ENCODE measurements at regions of chr18 and their contacts with region 1.

Region 1: GRCh38 chr18:21439446-21439846 is 161.1 kb downstream of the ESCO1 start:
- DNase-seq: no peak
- H3K4me3 ChIP-seq: no peak overlapping the region
- H3K27ac ChIP-seq: no peak overlapping the region
- H3K4me1 ChIP-seq: peaks cover 0 to 7% (median 0%) of the 10 kb centered on the region in 4 donors
- H3K27me3 ChIP-seq: no peaks in the 10 kb centered on the region
- CTCF ChIP-seq: no peak
- EP300 ChIP-seq: no peak
- POLR2A ChIP-seq: no peak

Region 2: GRCh38 chr18:21210278-21210677 is 229.2 kb before region 1 on chr18:
- intact Hi-C with region 1: loop called (anchors 5 kb)
- DNase-seq: no peak
- H3K4me3 ChIP-seq: no peak overlapping the region
- H3K27ac ChIP-seq: no peak overlapping the region
- H3K4me1 ChIP-seq: no peaks in the 10 kb centered on the region
- H3K27me3 ChIP-seq: no peaks in the 10 kb centered on the region
- CTCF ChIP-seq: no peak
- EP300 ChIP-seq: no peak
- POLR2A ChIP-seq: no peak

Region 3: GRCh38 chr18:21369146-21369545 is 70.3 kb before region 1 on chr18:
- intact Hi-C with region 1: loop called (anchors 10 kb)
- DNase-seq: no peak
- H3K4me3 ChIP-seq: no peak overlapping the region
- H3K27ac ChIP-seq: no peak overlapping the region
- H3K4me1 ChIP-seq: no peaks in the 10 kb centered on the region
- H3K27me3 ChIP-seq: no peaks in the 10 kb centered on the region
- CTCF ChIP-seq: no peak
- EP300 ChIP-seq: no peak
- POLR2A ChIP-seq: no peak

Region 4: DNA sequence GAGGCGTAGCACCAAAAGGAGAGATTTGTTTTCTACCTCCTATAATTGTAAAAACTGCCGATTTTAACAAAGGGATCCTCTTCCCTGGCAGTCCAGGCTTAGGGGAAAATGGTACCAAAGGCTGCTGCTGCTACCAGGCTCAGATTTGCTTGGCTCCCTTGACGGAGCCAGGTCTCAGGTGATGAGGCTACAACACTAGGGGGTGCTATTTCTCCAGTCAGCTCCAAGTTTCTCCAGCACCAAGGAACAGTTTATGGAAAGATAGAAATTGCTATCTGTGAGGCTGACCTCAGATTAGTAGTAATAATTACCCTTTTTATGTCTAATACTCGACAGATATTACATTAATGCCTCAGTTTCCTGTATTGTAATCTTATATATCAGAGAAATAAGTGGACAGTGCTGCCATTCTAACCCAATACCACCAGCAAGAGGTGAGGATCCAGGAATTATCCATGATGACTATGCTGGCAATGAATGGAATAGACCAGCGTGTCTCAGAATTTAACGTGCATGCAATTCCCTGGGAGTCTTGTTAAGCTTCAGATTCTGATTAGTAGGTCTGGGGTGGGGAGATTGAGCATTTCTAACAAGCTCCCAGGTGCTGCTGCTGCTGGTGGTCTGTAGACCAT is 49.8 kb after region 1 on chr18:
- intact Hi-C with region 1: loop called (anchors 10 kb)
- DNase-seq: no peak
- H3K4me3 ChIP-seq: no peak overlapping the region
- H3K27ac ChIP-seq: no peak overlapping the region
- H3K4me1 ChIP-seq: peaks cover 0 to 8% (median 5%) of the 10 kb centered on the region in 4 donors
- H3K27me3 ChIP-seq: no peaks in the 10 kb centered on the region
- CTCF ChIP-seq: peak; percentile 61 to 79 (median 68)
- EP300 ChIP-seq: no peak
- POLR2A ChIP-seq: no peak

Region 5: GRCh38 chr18:21704603-21705364 is 265.3 kb after region 1 on chr18 and contains the start of gene ABHD3:
- intact Hi-C with region 1: no loop called
- DNase-seq: peak; percentile 95
- H3K4me3 ChIP-seq: peak within 1 kb of the TSS; percentile 77 to 90 (median 84)
- H3K27ac ChIP-seq: peak within 1 kb of the TSS; percentile 91 to 97 (median 96)
- H3K4me1 ChIP-seq: peaks cover 16 to 23% (median 20%) of the 10 kb centered on the region in 4 donors
- H3K27me3 ChIP-seq: no peaks in the 10 kb centered on the region
- CTCF ChIP-seq: peak; percentile 28 to 73 (median 41)
- EP300 ChIP-seq: no peak
- POLR2A ChIP-seq: peak; percentile 56
- total RNA-seq, gene ABHD3: 5.1 to 8.3 (median 7.0) TPM

Measured in esophagus muscularis mucosa (tissue), 4 donors.